SK-N-SH (cell line): ENCODE measurements at regions of chr2 and their contacts with region 1.

Region 1: GRCh38 chr2:21404827-21405625 is 281.3 kb downstream of the TDRD15 start:
- DNase-seq: no peak
- H3K4me3 ChIP-seq: no peak overlapping the region
- H3K27ac ChIP-seq: no peak overlapping the region
- H3K4me1 ChIP-seq: peaks cover 0 to 19% of the 10 kb centered on the region in 2 experiments; a peak in 2 of 4 replicates
- H3K27me3 ChIP-seq: no peaks in the 10 kb centered on the region
- CTCF ChIP-seq: no peak
- EP300 ChIP-seq: no peak
- RAD21 ChIP-seq: no peak

Region 2: GRCh38 chr2:21422050-21422449 is 17.0 kb after region 1 on chr2:
- CTCF ChIA-PET with region 1: interaction called, 13 read pairs
- POLR2A ChIA-PET with region 1: interaction called, 3 read pairs
- DNase-seq: peak; percentile 45
- H3K4me3 ChIP-seq: peak overlapping the region in 1 of 2 experiments; percentile 37; a peak in 1 of 4 replicates
- H3K27ac ChIP-seq: no peak overlapping the region
- H3K4me1 ChIP-seq: peaks cover 0 to 3% of the 10 kb centered on the region in 2 experiments; a peak in 1 of 4 replicates
- H3K27me3 ChIP-seq: no peaks in the 10 kb centered on the region
- CTCF ChIP-seq: peak; percentile 38
- EP300 ChIP-seq: no peak
- RAD21 ChIP-seq: peak; percentile 70